ENCODE measurements at regions of chr19 and their contacts with region 1.

Region 1: DNA sequence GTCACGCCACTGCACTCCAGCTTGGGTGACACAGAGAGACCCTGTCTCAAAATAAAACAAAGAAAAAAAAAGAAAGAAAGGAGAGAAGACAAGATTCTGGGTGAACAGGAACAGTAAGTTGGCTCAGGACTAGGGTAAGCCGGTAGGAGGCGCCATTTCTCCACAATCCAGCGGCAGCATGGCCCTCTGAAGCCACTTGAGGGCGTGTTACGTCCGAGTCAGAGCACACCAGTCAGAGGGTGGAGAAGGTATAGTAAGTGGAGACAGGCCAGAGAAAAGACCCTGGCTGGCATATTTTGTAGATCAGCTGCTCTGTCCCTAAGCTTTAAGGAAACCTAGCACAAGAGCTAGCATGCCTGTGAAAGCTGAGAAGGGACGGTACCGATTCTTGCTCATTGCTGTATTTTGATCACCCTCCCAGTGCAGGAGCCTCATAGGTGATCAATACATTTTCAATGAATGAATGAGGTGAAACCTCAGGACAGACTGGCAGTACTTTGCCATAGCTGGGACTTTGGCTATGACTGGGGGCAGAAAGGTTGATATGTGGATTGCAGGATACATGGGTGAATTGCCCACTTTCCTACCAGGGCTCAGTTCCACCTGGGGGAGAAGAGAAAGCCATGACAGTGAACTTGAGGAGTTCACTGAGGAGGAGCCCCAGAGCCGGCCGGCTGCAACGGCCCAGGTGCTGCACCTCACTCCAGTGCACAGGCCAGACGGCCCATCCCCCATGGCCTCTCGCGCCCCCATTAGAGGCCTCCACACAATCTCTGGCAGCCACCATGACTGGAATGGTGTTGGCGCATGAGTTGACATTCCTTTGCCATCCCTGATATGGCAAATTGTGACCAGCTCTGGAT is 23.5 kb downstream of the POU2F2 start:
- DNase-seq: peak; percentile 82
- H3K4me3 Mint-ChIP-seq: no peak overlapping the region
- H3K27ac Mint-ChIP-seq: peak overlapping the region; percentile 42
- H3K4me1 Mint-ChIP-seq: peaks cover 43% of the 10 kb centered on the region
- H3K27me3 Mint-ChIP-seq: no peaks in the 10 kb centered on the region

Region 2: GRCh38 chr19:42121656-42122069 is 12.9 kb after region 1 on chr19:
- intact Hi-C with region 1: loop called (anchors 1 kb)
- DNase-seq: peak; percentile 74
- H3K4me3 Mint-ChIP-seq: peak overlapping the region; percentile 78
- H3K27ac Mint-ChIP-seq: peak overlapping the region; percentile 97
- H3K4me1 Mint-ChIP-seq: peaks cover 42% of the 10 kb centered on the region
- H3K27me3 Mint-ChIP-seq: no peaks in the 10 kb centered on the region

Region 3: GRCh38 chr19:42176990-42177685 is 68.4 kb after region 1 on chr19:
- intact Hi-C with region 1: loop called (anchors 2 kb)
- DNase-seq: peak; percentile 71
- H3K4me3 Mint-ChIP-seq: no peak overlapping the region
- H3K27ac Mint-ChIP-seq: no peak overlapping the region
- H3K4me1 Mint-ChIP-seq: peaks cover 19% of the 10 kb centered on the region
- H3K27me3 Mint-ChIP-seq: peaks cover 38% of the 10 kb centered on the region

Region 4: GRCh38 chr19:42199440-42200115 is 90.8 kb after region 1 on chr19:
- intact Hi-C with region 1: loop called (anchors 1 kb)
- DNase-seq: peak; percentile 75
- H3K4me3 Mint-ChIP-seq: peak overlapping the region; percentile 77
- H3K27ac Mint-ChIP-seq: peak overlapping the region; percentile 92
- H3K4me1 Mint-ChIP-seq: peaks cover 83% of the 10 kb centered on the region
- H3K27me3 Mint-ChIP-seq: no peaks in the 10 kb centered on the region

Region 5: DNA sequence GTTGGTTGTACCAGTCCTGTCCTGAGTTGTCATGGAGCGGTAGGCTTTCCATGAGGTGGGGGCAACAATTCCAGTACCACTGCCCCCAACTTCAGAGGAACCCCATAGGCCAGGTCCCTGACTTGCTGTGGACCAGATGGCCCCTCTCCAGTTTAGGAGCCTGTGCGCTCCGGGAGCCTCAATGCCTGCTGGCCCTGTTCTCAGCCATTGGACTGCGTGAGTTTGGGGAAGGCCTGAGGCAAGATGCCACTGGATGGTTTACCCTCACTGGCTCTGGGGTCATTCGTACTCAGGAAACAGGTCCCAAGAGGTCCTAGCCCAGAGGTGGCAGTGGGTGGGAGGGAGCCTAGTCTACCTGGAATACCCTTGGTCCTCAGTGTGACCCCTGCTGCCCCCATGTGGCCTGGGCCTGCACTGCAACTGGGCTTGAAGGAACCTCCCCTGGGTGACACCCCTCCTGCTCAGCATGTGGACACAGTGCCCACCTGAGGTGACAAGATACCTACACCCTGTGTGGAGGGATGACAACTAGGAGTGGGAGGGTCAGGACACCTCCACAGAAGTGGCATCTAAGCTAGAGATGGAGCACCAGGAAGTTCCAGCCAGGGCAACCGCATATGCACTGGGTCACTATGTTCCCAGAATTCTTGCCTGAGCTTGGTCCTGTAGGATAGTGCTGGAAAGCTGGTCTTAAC is 187.2 kb after region 1 on chr19:
- intact Hi-C with region 1: loop called (anchors 1 kb)
- DNase-seq: peak; percentile 78
- H3K4me3 Mint-ChIP-seq: no peak overlapping the region
- H3K27ac Mint-ChIP-seq: peak overlapping the region; percentile 3
- H3K4me1 Mint-ChIP-seq: no peaks in the 10 kb centered on the region
- H3K27me3 Mint-ChIP-seq: no peaks in the 10 kb centered on the region

Region 6: GRCh38 chr19:42396381-42397262 is 287.9 kb after region 1 on chr19:
- intact Hi-C with region 1: loop called (anchors 2 kb)
- DNase-seq: peak; percentile 97
- H3K4me3 Mint-ChIP-seq: peak overlapping the region; percentile 89
- H3K27ac Mint-ChIP-seq: peak overlapping the region; percentile 93
- H3K4me1 Mint-ChIP-seq: peaks cover 34% of the 10 kb centered on the region
- H3K27me3 Mint-ChIP-seq: peaks cover 5% of the 10 kb centered on the region

Measured in activated T-helper 1 cell treated with anti-CD3 and anti-CD28 coated beads, Interleukin-12 subunit alpha, Interleukin-12 subunit beta, Interleukin-2, Interleukin-4 antibody, amounts not matched to agents 30 ng/mL and 10 ng/mL and 1 ng/mL, durations not matched to agents 14 hours and 24 hours and 36 hours (primary cell).